Tibial artery (tissue), 4 donors: ENCODE measurements at regions of chr12 and their contacts with region 1.

Region 1: GRCh38 chr12:30695199-30696103 is at the start of gene IPO8:
- DNase-seq: peak; percentile 95 to 96
- H3K4me3 ChIP-seq: peak within 1 kb of the TSS; percentile 82 to 92
- H3K27ac ChIP-seq: peak within 1 kb of the TSS; percentile 82 to 85
- H3K4me1 ChIP-seq: peaks cover 0 to 36% (median 19%) of the 10 kb centered on the region in 4 donors
- H3K27me3 ChIP-seq: no peaks in the 10 kb centered on the region
- CTCF ChIP-seq: no peak

Region 2: GRCh38 chr12:29380536-29381523 is 1314.6 kb before region 1 on chr12 and contains the start of gene ERGIC2:
- intact Hi-C with region 1: loop called (anchors 5 kb)
- DNase-seq: peak; percentile 91 to 95
- H3K4me3 ChIP-seq: peak within 1 kb of the TSS; percentile 65 to 79
- H3K27ac ChIP-seq: peak within 1 kb of the TSS; percentile 74 to 81
- H3K4me1 ChIP-seq: peaks cover 0 to 12% (median 6%) of the 10 kb centered on the region in 4 donors
- H3K27me3 ChIP-seq: no peaks in the 10 kb centered on the region
- CTCF ChIP-seq: no peak

Region 3: DNA sequence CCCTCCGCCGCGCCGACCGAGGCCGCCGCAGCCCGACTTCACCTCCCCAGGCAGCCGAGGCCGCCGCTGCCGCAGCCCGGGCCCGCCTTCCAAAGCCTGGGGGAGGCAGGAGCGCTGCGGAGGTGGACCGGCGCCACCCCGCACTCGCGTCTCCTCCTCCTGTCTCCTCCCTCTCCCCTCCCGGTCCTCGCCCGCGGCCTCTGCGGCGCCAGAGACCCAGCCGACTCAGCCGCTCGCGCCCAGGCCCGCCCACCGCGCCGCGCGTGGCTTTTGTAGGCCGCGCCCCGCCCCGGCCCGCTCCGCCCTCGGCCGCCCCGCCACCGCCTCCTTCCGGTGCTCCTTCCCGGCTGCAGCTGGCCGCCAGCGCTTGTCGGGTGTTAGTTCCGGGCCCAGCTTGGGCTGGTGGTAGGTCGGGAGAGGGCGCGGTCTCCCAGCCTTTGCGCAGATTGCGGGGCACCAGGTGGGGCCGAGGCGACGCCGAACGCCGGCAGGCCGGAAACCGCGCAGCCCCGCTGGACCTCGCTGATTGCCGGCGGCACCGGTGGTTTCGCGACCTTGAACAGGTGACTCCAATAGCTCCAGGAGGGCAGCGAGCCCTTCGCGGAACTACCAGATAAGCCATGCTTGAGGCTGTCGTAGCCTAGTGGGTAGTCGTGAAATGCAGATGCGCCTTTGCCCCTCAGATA is 59.4 kb after region 1 on chr12 and contains the start of gene CAPRIN2:
- intact Hi-C with region 1: loop called (anchors 2 kb)
- DNase-seq: peak; percentile 94 to 98
- H3K4me3 ChIP-seq: peak within 1 kb of the TSS; percentile 78 to 96
- H3K27ac ChIP-seq: peak within 1 kb of the TSS; percentile 78 to 85
- H3K4me1 ChIP-seq: peaks cover 0 to 21% (median 10%) of the 10 kb centered on the region in 4 donors
- H3K27me3 ChIP-seq: no peaks in the 10 kb centered on the region
- CTCF ChIP-seq: peak; percentile 26 to 29

Region 4: GRCh38 chr12:30806989-30807694 is 111.7 kb after region 1 on chr12:
- intact Hi-C with region 1: loop called (anchors 10 kb)
- DNase-seq: no peak
- H3K4me3 ChIP-seq: no peak overlapping the region
- H3K27ac ChIP-seq: no peak overlapping the region
- H3K4me1 ChIP-seq: peaks cover 0 to 5% (median 0%) of the 10 kb centered on the region in 4 donors
- H3K27me3 ChIP-seq: no peaks in the 10 kb centered on the region
- CTCF ChIP-seq: peak; percentile 77 to 84